Kidney (tissue), 22 donors: ENCODE measurements at regions of chr5 and their contacts with region 1.

Region 1: GRCh38 chr5:55708732-55709131 is 3.4 kb downstream of the SLC38A9 start:
- DNase-seq: no peak
- H3K4me3 ChIP-seq: no peak overlapping the region
- H3K27ac ChIP-seq: no peak overlapping the region
- H3K4me1 ChIP-seq: peaks cover 0 to 5% (median 4%) of the 10 kb centered on the region in 3 donors
- H3K27me3 ChIP-seq: no peaks in the 10 kb centered on the region
- CTCF ChIP-seq: no peak

Region 2: GRCh38 chr5:55407059-55407684 is 301.6 kb before region 1 on chr5:
- intact Hi-C with region 1: loop called (anchors 10 kb)
- DNase-seq: peak in 2 of 5 donors; percentile 28 to 65
- H3K4me3 ChIP-seq: no peak overlapping the region
- H3K27ac ChIP-seq: no peak overlapping the region
- H3K4me1 ChIP-seq: no peaks in the 10 kb centered on the region
- H3K27me3 ChIP-seq: no peaks in the 10 kb centered on the region
- CTCF ChIP-seq: peak; percentile 60